ENCODE measurements at regions of chr1 and their contacts with region 1.

Region 1: GRCh38 chr1:202184750-202185460 is 8.7 kb upstream of the LGR6 start:
- DNase-seq: peak; percentile 55
- H3K4me3 ChIP-seq: no peak overlapping the region
- H3K27ac ChIP-seq: no peak overlapping the region
- H3K27me3 ChIP-seq: peaks cover 49% of the 10 kb centered on the region
- CTCF ChIP-seq: peak; percentile 92

Region 2: GRCh38 chr1:201850053-201850397 is 334.9 kb before region 1 on chr1:
- CTCF ChIA-PET with region 1: no interaction called
- POLR2A ChIA-PET with region 1: no interaction called
- DNase-seq: peak; percentile 65
- H3K4me3 ChIP-seq: no peak overlapping the region
- H3K27ac ChIP-seq: no peak overlapping the region
- H3K27me3 ChIP-seq: no peaks in the 10 kb centered on the region
- CTCF ChIP-seq: no peak

Region 3: GRCh38 chr1:202173993-202174392 is 10.9 kb before region 1 on chr1:
- CTCF ChIA-PET with region 1: interaction called, 11 read pairs
- POLR2A ChIA-PET with region 1: no interaction called
- DNase-seq: no peak
- H3K4me3 ChIP-seq: no peak overlapping the region
- H3K27ac ChIP-seq: no peak overlapping the region
- H3K27me3 ChIP-seq: peaks cover 15% of the 10 kb centered on the region
- CTCF ChIP-seq: no peak